ENCODE measurements at regions of chr1 and their contacts with region 1.

Region 1: GRCh38 chr1:39720094-39720999 is 18.3 kb upstream of the PPIE start:
- DNase-seq: no peak
- ATAC-seq: peak; percentile 37

Region 2: GRCh38 chr1:39609618-39610331 is 110.6 kb before region 1 on chr1:
- intact Hi-C with region 1: loop called (anchors 1 kb)
- DNase-seq: peak; percentile 90
- ATAC-seq: peak; percentile 94

Region 3: GRCh38 chr1:39672551-39672947 is 47.8 kb before region 1 on chr1:
- intact Hi-C with region 1: loop called (anchors 5 kb)
- DNase-seq: no peak
- ATAC-seq: no peak

Region 4: DNA sequence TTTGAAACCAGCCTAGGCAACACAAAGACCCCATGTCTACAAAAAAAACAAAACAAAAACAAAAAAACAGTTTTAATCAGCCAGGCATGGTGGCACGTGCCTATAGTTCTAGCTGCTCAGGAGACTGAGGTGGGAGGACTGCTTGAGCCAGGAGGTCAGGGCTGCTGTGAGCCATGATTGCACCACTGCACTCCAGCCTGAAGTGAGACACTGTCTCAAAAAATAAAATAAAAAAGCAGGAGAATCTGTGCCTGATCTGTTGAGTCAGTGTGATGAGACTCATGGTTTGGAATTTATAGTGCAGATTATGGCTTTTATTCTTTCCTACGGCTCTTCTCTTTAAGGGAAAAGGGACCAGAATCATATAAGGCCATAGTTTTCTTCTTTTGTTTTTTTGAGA is 146.4 kb after region 1 on chr1:
- intact Hi-C with region 1: no loop called
- DNase-seq: no peak
- ATAC-seq: no peak

Measured in Right ventricle myocardium inferior (tissue), 1 donor.